Right ventricle myocardium inferior (tissue), 1 donor: ENCODE measurements at regions of chr17 and their contacts with region 1.

Region 1: DNA sequence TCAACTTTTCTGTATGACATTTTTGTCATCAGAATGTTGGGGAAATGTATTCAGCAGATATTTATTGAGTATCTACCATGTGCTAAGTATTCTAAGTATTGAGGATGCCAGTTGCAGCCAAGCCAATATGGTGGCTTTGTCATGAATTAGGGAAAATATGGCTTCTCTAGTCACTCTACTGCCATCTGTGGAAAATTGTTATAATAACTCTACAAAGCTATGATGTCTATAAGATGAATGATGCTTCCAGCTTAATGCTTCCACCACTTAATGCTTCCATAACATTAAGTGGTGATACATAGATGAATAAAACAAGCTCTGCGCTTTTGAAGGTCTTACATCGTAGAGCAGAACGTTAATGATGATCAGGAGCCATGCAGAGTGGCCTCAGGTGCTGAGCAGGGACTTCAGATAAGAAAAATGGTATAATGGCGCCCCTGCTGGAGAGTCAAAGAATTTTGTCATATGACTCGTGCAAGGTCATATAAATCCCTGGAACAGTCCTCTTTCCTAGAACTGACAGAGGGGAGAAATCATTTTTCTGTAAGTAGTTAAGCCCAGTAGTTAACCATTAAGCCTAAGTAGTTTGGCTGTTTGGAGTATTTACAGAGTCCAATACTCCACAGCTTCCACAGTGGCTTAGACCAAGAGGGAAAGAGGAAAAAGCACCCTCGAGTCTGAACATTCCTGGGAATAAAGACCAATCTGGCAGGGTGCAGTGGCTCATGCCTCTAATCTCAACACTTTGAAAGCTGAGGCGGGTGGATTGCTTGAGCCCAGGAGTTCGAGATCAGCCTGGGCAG is 2.7 kb upstream of the TMIGD1 start:
- DNase-seq: no peak
- ATAC-seq: no peak

Region 2: DNA sequence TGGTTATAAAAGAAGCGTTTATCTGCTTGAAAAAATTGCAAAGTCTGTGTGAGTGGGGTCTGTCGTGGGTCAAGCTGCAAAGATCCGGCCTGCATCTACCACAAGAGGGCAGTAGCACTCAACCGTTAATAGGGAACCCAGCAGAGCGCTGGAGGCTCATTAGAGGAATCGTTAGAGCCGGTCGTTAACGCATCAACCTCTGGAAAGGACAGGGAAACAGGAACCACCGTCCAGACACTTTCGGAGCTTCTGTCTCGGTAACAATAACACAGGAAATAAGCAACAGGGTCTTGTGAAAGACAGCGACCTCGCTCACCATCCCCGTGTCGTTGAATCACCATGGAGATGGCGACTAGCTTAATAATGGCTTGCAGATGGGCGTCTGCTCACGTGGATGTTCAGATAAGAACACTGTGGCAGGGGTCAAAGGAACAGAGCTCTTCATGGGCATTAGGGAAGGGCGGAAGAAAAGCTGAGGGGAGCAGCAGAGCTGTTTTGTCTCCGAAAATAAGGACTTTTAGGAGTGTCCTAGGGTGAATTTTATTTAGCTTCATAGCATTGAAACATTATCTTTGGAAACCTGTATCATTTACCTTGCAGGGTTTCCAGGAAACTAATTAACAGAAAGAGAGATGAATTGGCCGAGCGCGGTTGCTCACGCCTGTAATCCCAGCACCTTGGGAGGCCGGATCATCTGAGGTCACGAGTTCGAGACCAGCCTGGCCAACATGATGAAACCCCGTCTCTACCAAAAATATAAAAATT is 231.8 kb before region 1 on chr17:
- intact Hi-C with region 1: loop called (anchors 5 kb)
- DNase-seq: peak; percentile 84
- ATAC-seq: peak; percentile 97

Region 3: GRCh38 chr17:30161601-30162000 is 175.0 kb before region 1 on chr17:
- intact Hi-C with region 1: no loop called
- DNase-seq: no peak
- ATAC-seq: no peak

Region 4: DNA sequence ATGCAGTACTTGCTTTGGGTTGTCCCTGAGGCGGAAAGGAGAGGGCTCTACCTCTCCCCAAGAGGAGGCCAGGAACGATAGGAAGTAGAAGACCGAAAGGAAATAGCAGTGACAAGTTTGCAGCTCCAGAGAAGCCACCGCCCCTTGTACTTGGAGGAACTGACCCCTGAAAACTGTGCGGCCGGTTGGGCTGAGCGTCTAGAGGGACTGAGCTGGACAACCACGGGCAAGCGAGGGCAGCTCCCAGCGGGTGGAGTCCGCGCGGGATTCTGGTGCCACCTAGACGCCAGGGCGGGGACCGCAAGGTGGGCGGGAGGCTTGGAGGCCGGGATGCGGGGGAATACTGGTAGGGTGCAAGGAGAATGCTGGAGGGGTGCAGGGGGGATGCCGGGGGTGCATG is 99.8 kb before region 1 on chr17:
- intact Hi-C with region 1: no loop called
- DNase-seq: no peak
- ATAC-seq: peak; percentile 73